HCT116 (cell line): ENCODE measurements at regions of chr4 and their contacts with region 1.

Region 1: GRCh38 chr4:74675673-74676279 is 118.5 kb downstream of the BTC start:
- DNase-seq: peak; percentile 80
- ATAC-seq: peak; percentile 90
- H3K4me3 ChIP-seq: no peak overlapping the region
- H3K27ac ChIP-seq: no peak overlapping the region
- H3K4me1 ChIP-seq: peaks cover 7 to 33% of the 10 kb centered on the region in 2 experiments; a peak in 3 of 4 replicates
- H3K27me3 ChIP-seq: no peaks in the 10 kb centered on the region
- CTCF ChIP-seq: peak; percentile 78 to 90 (median 80)
- POLR2A ChIP-seq: no peak
- RAD21 ChIP-seq: peak; percentile 97

Region 2: DNA sequence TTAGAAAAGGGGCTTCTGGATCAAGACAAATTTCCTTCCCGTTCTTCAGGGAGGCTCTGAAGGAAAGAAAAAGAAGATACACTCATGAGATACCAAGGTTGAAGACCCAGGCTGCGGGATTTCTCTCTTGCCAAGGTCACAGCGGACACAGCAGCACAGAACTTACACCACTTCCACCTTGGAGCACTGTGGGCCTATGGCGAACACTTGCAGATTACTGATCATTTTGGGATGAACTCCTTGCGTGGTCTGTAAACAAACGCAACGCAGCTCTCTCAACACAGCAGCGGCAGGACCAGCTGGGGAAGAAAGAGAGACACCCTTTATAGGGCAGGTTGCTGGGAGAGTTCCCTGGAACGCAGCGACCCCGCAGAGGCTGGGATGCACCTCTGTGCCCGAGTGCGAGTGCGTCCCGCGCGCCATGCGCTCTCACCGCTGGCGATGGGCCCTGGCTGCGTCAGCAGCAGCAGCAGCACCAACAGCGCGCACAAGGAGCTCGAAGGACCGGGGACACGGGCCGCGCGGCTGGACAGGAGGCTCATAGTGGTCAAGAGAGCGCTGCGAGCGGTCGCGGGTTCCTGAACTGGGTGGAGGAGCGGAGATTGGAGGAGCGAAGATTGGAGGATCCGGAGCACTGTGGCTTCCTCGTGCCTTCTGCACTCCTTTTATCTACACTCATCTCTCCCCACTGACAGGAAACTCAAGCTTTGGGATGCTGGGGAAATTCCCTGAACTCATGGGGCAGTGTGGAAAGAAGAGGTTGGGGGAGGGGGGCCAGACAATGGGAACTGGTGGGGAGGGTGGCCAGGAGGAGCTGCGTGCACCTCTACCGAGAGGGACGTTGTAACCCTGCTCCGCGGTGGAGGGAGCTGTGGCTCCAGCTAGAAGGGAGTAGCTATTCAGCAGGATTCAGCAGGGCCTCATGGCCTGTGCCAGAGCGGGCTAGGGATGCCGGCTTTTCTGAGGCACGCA is 677.5 kb before region 1 on chr4 and contains the start of gene CXCL5:
- CTCF ChIA-PET with region 1: no interaction called
- POLR2A ChIA-PET with region 1: no interaction called
- RAD21 ChIA-PET with region 1: no interaction called
- intact Hi-C with region 1: no loop called
- DNase-seq: no peak
- ATAC-seq: no peak
- H3K4me3 ChIP-seq: no peak within 1 kb of the TSS
- H3K27ac ChIP-seq: no peak within 1 kb of the TSS
- H3K4me1 ChIP-seq: no peaks in the 10 kb centered on the region
- H3K27me3 ChIP-seq: no peaks in the 10 kb centered on the region
- CTCF ChIP-seq: no peak
- POLR2A ChIP-seq: no peak
- RAD21 ChIP-seq: no peak
- total RNA-seq, gene CXCL5: not detected

Region 3: GRCh38 chr4:74228691-74229640 is 446.8 kb before region 1 on chr4:
- CTCF ChIA-PET with region 1: interaction called, 17 read pairs
- POLR2A ChIA-PET with region 1: no interaction called
- RAD21 ChIA-PET with region 1: no interaction called
- intact Hi-C with region 1: no loop called
- DNase-seq: peak; percentile 72
- ATAC-seq: peak; percentile 92
- H3K4me3 ChIP-seq: no peak overlapping the region
- H3K27ac ChIP-seq: no peak overlapping the region
- H3K4me1 ChIP-seq: peaks cover 3 to 35% of the 10 kb centered on the region in 2 experiments
- H3K27me3 ChIP-seq: no peaks in the 10 kb centered on the region
- CTCF ChIP-seq: peak; percentile 81 to 97 (median 89); a peak in 5 of 6 replicates
- POLR2A ChIP-seq: no peak
- RAD21 ChIP-seq: peak; percentile 87

Region 4: DNA sequence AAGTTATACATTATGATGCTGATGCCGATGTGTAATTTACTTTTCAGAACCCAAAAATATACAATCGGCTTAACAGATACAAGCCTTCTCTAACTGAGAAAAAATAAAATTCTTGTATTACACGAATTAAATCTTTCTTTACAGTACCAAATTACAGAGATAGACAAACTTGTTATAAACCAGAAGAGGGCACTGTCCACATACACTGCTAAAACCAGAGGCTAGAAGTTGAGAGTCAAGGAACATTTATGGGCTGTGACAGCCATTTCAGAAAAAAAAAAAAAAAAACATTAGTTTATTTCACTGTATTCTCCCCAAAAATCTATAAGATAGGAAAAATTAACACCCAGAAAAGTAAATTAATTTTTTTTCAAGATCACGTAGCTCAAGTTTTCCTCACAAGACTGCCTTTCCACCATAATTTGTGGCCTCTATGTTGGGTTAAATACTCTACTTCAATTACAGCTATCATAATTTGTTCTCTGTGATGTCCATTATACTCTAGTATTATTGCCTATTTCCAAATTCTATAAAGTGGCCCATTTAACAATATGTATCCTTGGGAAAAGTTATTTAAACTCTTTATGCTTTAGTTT is 298.8 kb before region 1 on chr4:
- CTCF ChIA-PET with region 1: interaction called, 5 read pairs
- POLR2A ChIA-PET with region 1: interaction called, 4 read pairs
- RAD21 ChIA-PET with region 1: interaction called in 1 of 2 experiments, 3 read pairs
- intact Hi-C with region 1: loop called (anchors 1 kb)
- DNase-seq: no peak
- ATAC-seq: no peak
- H3K4me3 ChIP-seq: no peak overlapping the region
- H3K27ac ChIP-seq: peak overlapping the region; percentile 94
- H3K4me1 ChIP-seq: peaks cover 53 to 86% of the 10 kb centered on the region in 2 experiments
- H3K27me3 ChIP-seq: no peaks in the 10 kb centered on the region
- CTCF ChIP-seq: peak in 2 of 3 experiments; percentile 57 to 62; a peak in 4 of 6 replicates
- POLR2A ChIP-seq: no peak
- RAD21 ChIP-seq: peak; percentile 76

Region 5: DNA sequence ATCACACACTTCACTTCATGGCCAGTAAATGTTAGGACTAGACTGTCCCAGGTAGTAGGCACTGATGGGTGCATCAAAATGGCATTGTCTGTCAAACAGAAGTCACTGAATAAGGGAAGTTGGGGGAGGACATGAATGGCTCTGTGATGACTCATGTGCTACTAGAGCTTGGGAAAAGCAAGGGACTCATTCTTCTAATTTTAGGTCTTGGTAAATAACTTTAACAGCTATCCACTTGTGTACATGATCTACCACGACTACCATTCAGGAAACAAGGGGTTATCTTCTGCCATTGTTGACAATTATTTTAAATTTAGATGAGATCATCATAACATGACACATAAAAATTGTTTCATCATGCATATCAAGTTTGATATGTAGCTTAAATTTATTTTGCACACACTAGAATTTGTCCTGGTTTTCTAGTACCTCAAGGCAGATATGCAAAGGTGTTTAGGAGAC is 224.5 kb before region 1 on chr4:
- CTCF ChIA-PET with region 1: interaction called, 6 read pairs
- POLR2A ChIA-PET with region 1: interaction called, 12 read pairs
- RAD21 ChIA-PET with region 1: no interaction called
- intact Hi-C with region 1: loop called (anchors 2 kb)
- DNase-seq: no peak
- ATAC-seq: peak; percentile 48
- H3K4me3 ChIP-seq: no peak overlapping the region; a peak in 1 of 4 replicates
- H3K27ac ChIP-seq: peak overlapping the region; percentile 85; the same call in 1 of the 2 replicates
- H3K4me1 ChIP-seq: peaks cover 86 to 99% of the 10 kb centered on the region in 2 experiments
- H3K27me3 ChIP-seq: no peaks in the 10 kb centered on the region
- CTCF ChIP-seq: no peak
- POLR2A ChIP-seq: no peak
- RAD21 ChIP-seq: 0 out of 2 replicates have a peak, but pooled peaks have one; percentile 7

Region 6: DNA sequence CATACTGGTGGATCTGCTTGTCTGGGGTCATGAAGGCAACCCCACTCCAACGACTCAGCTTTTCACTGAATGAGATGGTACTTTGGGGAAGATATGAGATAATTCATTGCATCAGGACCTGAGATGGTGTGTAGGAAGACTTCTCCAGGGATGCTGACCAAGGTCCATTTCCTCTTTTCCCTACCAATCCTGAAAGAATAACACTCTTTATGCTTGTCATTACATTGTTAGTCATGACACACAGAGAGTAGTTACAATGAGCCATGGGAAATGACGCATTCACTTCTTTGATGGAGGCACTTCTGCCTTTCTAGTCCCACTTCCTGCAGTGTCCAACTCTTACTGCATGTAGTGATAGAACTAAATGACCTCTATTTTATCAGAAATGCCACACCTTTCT is 172.2 kb before region 1 on chr4:
- CTCF ChIA-PET with region 1: no interaction called
- POLR2A ChIA-PET with region 1: no interaction called
- RAD21 ChIA-PET with region 1: no interaction called
- intact Hi-C with region 1: no loop called
- DNase-seq: no peak
- ATAC-seq: no peak
- H3K4me3 ChIP-seq: no peak overlapping the region
- H3K27ac ChIP-seq: no peak overlapping the region
- H3K4me1 ChIP-seq: peaks cover 0 to 5% of the 10 kb centered on the region in 2 experiments; a peak in 1 of 4 replicates
- H3K27me3 ChIP-seq: no peaks in the 10 kb centered on the region
- CTCF ChIP-seq: no peak
- POLR2A ChIP-seq: no peak
- RAD21 ChIP-seq: no peak

Region 7: GRCh38 chr4:74665377-74665776 is 10.4 kb before region 1 on chr4:
- CTCF ChIA-PET with region 1: interaction called, 8 read pairs
- POLR2A ChIA-PET with region 1: interaction called, 18 read pairs
- RAD21 ChIA-PET with region 1: no interaction called
- intact Hi-C with region 1: no loop called
- DNase-seq: peak; percentile 80
- ATAC-seq: peak; percentile 81
- H3K4me3 ChIP-seq: peak overlapping the region in 1 of 2 experiments; percentile 22; a peak in 2 of 4 replicates
- H3K27ac ChIP-seq: peak overlapping the region; percentile 93
- H3K4me1 ChIP-seq: peaks cover 86 to 99% of the 10 kb centered on the region in 2 experiments
- H3K27me3 ChIP-seq: no peaks in the 10 kb centered on the region
- CTCF ChIP-seq: no peak
- POLR2A ChIP-seq: no peak
- RAD21 ChIP-seq: no peak

Region 8: GRCh38 chr4:74975848-74976824 is 300.4 kb after region 1 on chr4:
- CTCF ChIA-PET with region 1: no interaction called
- POLR2A ChIA-PET with region 1: no interaction called
- RAD21 ChIA-PET with region 1: no interaction called
- intact Hi-C with region 1: no loop called
- DNase-seq: no peak
- ATAC-seq: no peak
- H3K4me3 ChIP-seq: no peak overlapping the region
- H3K27ac ChIP-seq: no peak overlapping the region
- H3K4me1 ChIP-seq: no peaks in the 10 kb centered on the region
- H3K27me3 ChIP-seq: no peaks in the 10 kb centered on the region
- CTCF ChIP-seq: no peak
- POLR2A ChIP-seq: no peak
- RAD21 ChIP-seq: no peak